ENCODE measurements at regions of chr15 and their contacts with region 1.

Region 1: DNA sequence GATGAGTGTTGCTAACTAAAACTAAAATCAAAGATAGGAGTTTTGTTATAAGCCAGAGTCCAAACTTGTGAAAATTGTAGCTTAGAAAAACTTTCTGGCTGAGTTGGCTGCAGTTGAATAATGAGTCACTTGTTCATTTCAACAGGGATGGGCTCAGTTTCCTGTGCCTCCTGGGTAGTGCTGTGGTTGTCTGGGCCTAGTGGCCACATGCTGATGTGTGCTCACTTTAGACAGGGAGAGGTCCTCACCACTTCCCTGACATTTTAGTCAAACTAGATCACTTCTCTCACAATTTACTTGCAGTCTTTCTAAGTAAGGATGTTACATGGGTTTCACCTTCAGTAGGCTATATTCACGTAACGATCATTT is 6.3 kb upstream of the UBE2Q2 start:
- DNase-seq: peak in 1 of 2 experiments; percentile 8
- H3K4me3 ChIP-seq: no peak overlapping the region
- H3K27ac ChIP-seq: no peak overlapping the region
- H3K4me1 ChIP-seq: peaks cover 11% of the 10 kb centered on the region
- H3K27me3 ChIP-seq: no peaks in the 10 kb centered on the region
- CTCF ChIP-seq: no peak

Region 2: GRCh38 chr15:73922186-73923151 is 1914.5 kb before region 1 on chr15:
- CTCF ChIA-PET with region 1: interaction called, 14 read pairs
- POLR2A ChIA-PET with region 1: no interaction called
- intact Hi-C with region 1: no loop called
- DNase-seq: no peak
- H3K4me3 ChIP-seq: no peak overlapping the region
- H3K27ac ChIP-seq: no peak overlapping the region
- H3K4me1 ChIP-seq: peaks cover 34% of the 10 kb centered on the region
- H3K27me3 ChIP-seq: no peaks in the 10 kb centered on the region
- CTCF ChIP-seq: no peak

Region 3: GRCh38 chr15:75523011-75523410 is 313.9 kb before region 1 on chr15:
- CTCF ChIA-PET with region 1: no interaction called
- POLR2A ChIA-PET with region 1: no interaction called
- intact Hi-C with region 1: no loop called
- DNase-seq: no peak
- H3K4me3 ChIP-seq: no peak overlapping the region
- H3K27ac ChIP-seq: no peak overlapping the region
- H3K4me1 ChIP-seq: no peaks in the 10 kb centered on the region
- H3K27me3 ChIP-seq: no peaks in the 10 kb centered on the region
- CTCF ChIP-seq: no peak

Region 4: GRCh38 chr15:75775296-75776064 is 61.5 kb before region 1 on chr15:
- CTCF ChIA-PET with region 1: no interaction called
- POLR2A ChIA-PET with region 1: no interaction called
- intact Hi-C with region 1: no loop called
- DNase-seq: peak in 1 of 2 experiments; percentile 52
- H3K4me3 ChIP-seq: no peak overlapping the region
- H3K27ac ChIP-seq: no peak overlapping the region
- H3K4me1 ChIP-seq: peaks cover 16% of the 10 kb centered on the region
- H3K27me3 ChIP-seq: 0 out of 2 replicates have a peak, but pooled peaks cover under 1% of the 10 kb centered on the region
- CTCF ChIP-seq: no peak

Region 5: GRCh38 chr15:75785771-75786574 is 51.0 kb before region 1 on chr15:
- CTCF ChIA-PET with region 1: no interaction called
- POLR2A ChIA-PET with region 1: no interaction called
- intact Hi-C with region 1: no loop called
- DNase-seq: no peak
- H3K4me3 ChIP-seq: no peak overlapping the region
- H3K27ac ChIP-seq: no peak overlapping the region
- H3K4me1 ChIP-seq: no peaks in the 10 kb centered on the region
- H3K27me3 ChIP-seq: peaks cover 16% of the 10 kb centered on the region
- CTCF ChIP-seq: no peak

Region 6: GRCh38 chr15:76696871-76697270 is 859.9 kb after region 1 on chr15:
- CTCF ChIA-PET with region 1: no interaction called
- POLR2A ChIA-PET with region 1: no interaction called
- intact Hi-C with region 1: no loop called
- DNase-seq: no peak
- H3K4me3 ChIP-seq: no peak overlapping the region
- H3K27ac ChIP-seq: no peak overlapping the region
- H3K4me1 ChIP-seq: no peaks in the 10 kb centered on the region
- H3K27me3 ChIP-seq: no peaks in the 10 kb centered on the region
- CTCF ChIP-seq: no peak